MCF 10A (cell line): ENCODE measurements at regions of chr3 and their contacts with region 1.

Region 1: GRCh38 chr3:102124301-102125158 is 275.2 kb downstream of the NFKBIZ start:
- DNase-seq: peak; percentile 83
- H3K4me3 Mint-ChIP-seq: peak overlapping the region; percentile 13
- H3K27ac Mint-ChIP-seq: peak overlapping the region; percentile 98
- H3K4me1 Mint-ChIP-seq: peaks cover 24% of the 10 kb centered on the region
- H3K27me3 Mint-ChIP-seq: no peaks in the 10 kb centered on the region
- CTCF ChIP-seq: no peak

Region 2: DNA sequence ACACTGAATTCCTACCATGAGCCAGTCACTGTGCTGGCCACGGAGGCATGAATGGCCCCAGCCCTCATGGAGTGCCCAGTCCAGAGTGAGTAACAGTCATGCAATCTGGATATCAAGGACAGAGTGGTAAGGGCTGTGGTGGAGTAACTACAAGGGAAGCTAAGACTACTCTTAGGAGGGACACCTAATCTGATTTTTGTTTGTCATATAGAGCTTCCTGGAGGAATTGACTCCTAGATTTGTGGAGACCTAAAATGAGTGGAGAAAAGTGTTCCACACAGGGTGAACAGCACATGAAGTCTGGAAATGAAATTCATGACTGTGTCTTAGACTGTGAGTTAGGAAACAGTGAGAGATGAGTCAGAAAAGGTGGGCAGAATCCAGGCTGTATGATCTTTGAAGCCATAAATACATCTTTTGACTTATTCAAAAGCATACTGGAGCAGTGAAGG is 55.3 kb before region 1 on chr3:
- CTCF ChIA-PET with region 1: interaction called, 3 read pairs
- POLR2A ChIA-PET with region 1: no interaction called
- intact Hi-C with region 1: loop called (anchors 5 kb)
- DNase-seq: peak; percentile 76
- H3K4me3 Mint-ChIP-seq: no peak overlapping the region
- H3K27ac Mint-ChIP-seq: peak overlapping the region; percentile 68
- H3K4me1 Mint-ChIP-seq: peaks cover 28% of the 10 kb centered on the region
- H3K27me3 Mint-ChIP-seq: no peaks in the 10 kb centered on the region
- CTCF ChIP-seq: no peak

Region 3: DNA sequence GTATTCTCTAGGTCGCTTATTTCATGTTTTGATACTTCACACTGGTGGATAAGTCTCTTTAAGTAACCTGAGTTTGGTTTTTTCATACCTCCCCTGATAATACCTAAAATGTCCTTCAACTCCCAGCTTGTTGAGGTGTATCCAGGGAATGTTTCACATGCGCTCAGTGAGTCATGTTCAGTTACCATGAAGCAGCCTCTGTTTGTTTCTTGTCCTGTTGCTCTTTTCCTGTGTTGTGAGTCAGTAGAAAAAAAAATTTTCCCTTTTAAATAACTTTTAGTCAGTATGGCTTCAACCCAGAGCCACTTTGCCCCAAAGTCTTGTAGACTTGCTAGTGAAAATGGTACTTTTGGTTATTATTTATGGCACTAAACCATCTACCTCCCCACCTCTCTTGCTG is 31.9 kb after region 1 on chr3:
- CTCF ChIA-PET with region 1: no interaction called
- POLR2A ChIA-PET with region 1: interaction called, 6 read pairs
- intact Hi-C with region 1: loop called (anchors 2 kb)
- DNase-seq: peak; percentile 90
- H3K4me3 Mint-ChIP-seq: no peak overlapping the region
- H3K27ac Mint-ChIP-seq: peak overlapping the region; percentile 98
- H3K4me1 Mint-ChIP-seq: peaks cover 25% of the 10 kb centered on the region
- H3K27me3 Mint-ChIP-seq: no peaks in the 10 kb centered on the region
- CTCF ChIP-seq: no peak

Region 4: GRCh38 chr3:102189541-102189940 is 65.0 kb after region 1 on chr3:
- CTCF ChIA-PET with region 1: no interaction called
- POLR2A ChIA-PET with region 1: no interaction called
- intact Hi-C with region 1: no loop called
- DNase-seq: no peak
- H3K4me3 Mint-ChIP-seq: peak overlapping the region; percentile 38
- H3K27ac Mint-ChIP-seq: peak overlapping the region; percentile 78
- H3K4me1 Mint-ChIP-seq: peaks cover 37% of the 10 kb centered on the region
- H3K27me3 Mint-ChIP-seq: no peaks in the 10 kb centered on the region
- CTCF ChIP-seq: no peak